ENCODE measurements at regions of chr10 and their contacts with region 1.

Region 1: DNA sequence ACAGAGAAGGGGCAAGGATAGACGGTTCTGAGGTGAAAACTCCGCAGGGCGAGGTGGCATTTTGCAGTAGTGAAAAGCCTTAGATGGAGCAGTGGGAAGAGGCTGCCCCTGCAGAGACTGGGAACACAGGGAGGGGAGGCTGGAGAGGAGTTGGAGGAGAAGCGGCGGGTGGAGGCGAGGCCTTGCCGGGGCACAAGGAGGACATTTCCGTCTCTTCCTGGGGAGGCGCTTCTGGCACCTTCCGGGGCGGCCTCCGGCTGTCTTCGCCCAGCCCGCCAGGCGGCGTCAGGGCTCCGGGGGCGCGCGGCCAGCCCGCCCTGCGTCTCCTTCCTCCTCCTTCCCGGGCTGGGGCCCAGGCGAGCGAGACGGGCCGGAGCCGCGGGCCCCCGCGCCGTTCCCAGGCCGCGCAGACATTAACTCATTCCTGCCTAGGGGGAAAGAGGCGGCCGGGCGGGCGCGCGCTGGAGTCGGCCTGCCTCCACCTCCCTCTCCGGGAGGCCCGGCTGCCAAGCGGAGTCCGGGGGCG is 42.7 kb downstream of the LDB3 start:
- DNase-seq: peak; percentile 79 to 90 (median 85)
- ATAC-seq: peak; percentile 95
- H3K4me3 ChIP-seq: peak overlapping the region; percentile 73
- H3K4me3 Mint-ChIP-seq: peak overlapping the region; percentile 82 to 93 (median 88)
- H3K27ac ChIP-seq: peak overlapping the region; percentile 87
- H3K27ac Mint-ChIP-seq: peak overlapping the region; percentile 94 to 97 (median 95)
- H3K4me1 ChIP-seq: peaks cover 5 to 9% of the 10 kb centered on the region in 2 donors
- H3K4me1 Mint-ChIP-seq: peaks cover 4 to 17% (median 8%) of the 10 kb centered on the region in 7 donors
- H3K27me3 ChIP-seq: no peaks in the 10 kb centered on the region
- H3K27me3 Mint-ChIP-seq: no peaks in the 10 kb centered on the region

Region 2: DNA sequence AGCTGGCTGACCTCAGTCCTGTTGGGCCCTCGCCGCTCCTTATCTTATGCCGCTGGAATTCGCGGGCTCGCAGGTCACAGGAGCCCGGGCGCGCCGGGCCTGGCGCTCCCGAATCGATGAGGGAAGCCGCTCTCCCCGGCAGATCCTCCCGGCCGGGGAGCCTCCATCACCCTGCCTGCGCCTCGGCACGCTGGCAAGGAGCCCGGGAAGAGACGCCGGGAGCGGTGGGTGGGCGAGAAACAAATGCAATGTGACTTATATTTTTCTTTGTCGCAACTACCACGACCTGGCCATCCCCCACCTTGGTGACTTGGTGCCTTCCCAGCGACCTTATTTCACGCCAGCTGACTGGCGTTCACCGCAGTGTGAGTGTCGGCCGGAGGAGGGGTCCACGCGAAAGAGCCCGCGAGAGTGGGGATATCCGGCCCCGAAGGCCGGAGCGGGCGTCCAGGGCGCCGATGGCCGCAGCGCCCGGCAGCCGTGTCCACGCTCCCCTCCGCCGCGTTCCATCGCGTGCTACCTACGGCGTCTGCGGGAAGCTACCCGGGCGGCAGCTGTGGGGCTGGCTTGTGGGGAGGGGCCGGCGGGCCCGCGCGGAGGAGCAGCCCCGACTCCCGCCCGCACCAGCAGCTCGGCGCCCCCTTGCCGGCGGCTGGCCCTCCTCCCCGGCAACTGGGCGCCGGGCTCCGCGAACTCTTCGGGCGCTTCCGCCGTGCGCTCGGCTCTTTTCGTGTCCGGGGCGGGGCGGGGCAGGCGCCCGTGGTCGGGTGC is 44.9 kb after region 1 on chr10:
- CTCF ChIA-PET with region 1: no interaction called
- POLR2A ChIA-PET with region 1: interaction called, 10 read pairs
- intact Hi-C with region 1: loop called (anchors 1 to 2 kb)
- DNase-seq: peak; percentile 68 to 95 (median 82)
- ATAC-seq: peak; percentile 97
- H3K4me3 ChIP-seq: peak overlapping the region; percentile 73
- H3K4me3 Mint-ChIP-seq: peak overlapping the region; percentile 78 to 95 (median 86)
- H3K27ac ChIP-seq: peak overlapping the region; percentile 50
- H3K27ac Mint-ChIP-seq: peak overlapping the region in 4 of 9 donors; percentile 31 to 71 (median 50)
- H3K4me1 ChIP-seq: peaks cover 9 to 11% of the 10 kb centered on the region in 2 donors
- H3K4me1 Mint-ChIP-seq: peaks cover 13 to 47% (median 36%) of the 10 kb centered on the region in 7 donors
- H3K27me3 ChIP-seq: peaks cover 0 to 6% of the 10 kb centered on the region in 2 donors
- H3K27me3 Mint-ChIP-seq: peaks cover 24 to 52% (median 31%) of the 10 kb centered on the region in 5 donors

Region 3: DNA sequence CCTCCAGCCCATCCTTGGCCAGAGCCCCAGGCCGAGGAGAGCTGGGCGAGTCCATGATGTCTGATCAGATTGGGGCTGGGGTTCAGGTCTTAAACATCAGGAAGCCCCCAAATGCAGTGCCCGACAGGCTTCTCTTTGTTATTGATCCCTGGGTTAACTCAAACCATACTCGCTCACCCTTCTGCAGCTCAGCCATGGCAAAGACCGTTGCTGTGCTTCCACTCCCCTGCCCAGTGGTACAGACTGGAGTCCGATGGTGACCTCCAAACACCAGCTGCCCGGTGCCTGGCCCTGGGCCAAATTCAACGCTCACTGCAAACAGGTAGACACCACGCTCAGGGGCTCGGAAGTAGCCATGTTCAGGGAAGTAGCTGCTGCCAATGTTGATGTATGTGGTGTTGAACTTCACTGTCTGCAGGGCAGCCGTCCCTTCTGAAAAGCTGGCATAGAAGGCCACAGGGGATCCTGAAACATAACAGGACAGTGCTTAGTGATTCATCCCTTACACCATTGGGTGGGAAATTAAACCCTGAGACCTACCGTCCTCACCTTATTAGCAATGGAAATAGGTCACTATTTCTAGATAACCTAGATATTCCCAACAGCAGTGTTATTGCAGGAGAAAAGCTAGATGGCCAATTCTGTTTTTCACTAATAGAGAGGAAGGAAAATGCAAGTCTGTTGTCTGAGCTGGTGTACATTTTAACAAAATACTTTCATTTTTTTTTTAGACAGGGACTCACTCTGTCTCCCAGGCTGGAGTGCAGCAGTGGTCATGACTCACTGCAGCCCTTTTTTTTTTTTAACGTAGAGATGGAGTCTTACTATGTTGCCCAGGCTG is 225.8 kb after region 1 on chr10:
- CTCF ChIA-PET with region 1: no interaction called
- POLR2A ChIA-PET with region 1: no interaction called
- intact Hi-C with region 1: loop called (anchors 1 kb)
- DNase-seq: peak in 1 of 9 donors; percentile 5
- ATAC-seq: no peak
- H3K4me3 ChIP-seq: no peak overlapping the region
- H3K4me3 Mint-ChIP-seq: no peak overlapping the region
- H3K27ac ChIP-seq: no peak overlapping the region
- H3K27ac Mint-ChIP-seq: no peak overlapping the region
- H3K4me1 ChIP-seq: no peaks in the 10 kb centered on the region
- H3K4me1 Mint-ChIP-seq: peaks cover 0 to 7% (median 0%) of the 10 kb centered on the region in 7 donors
- H3K27me3 ChIP-seq: no peaks in the 10 kb centered on the region
- H3K27me3 Mint-ChIP-seq: peaks cover 0 to 3% (median 0%) of the 10 kb centered on the region in 5 donors

Region 4: GRCh38 chr10:86971232-86971991 is 260.4 kb after region 1 on chr10:
- CTCF ChIA-PET with region 1: interaction called, 3 read pairs
- POLR2A ChIA-PET with region 1: no interaction called
- intact Hi-C with region 1: loop called (anchors 1 kb)
- DNase-seq: peak; percentile 85 to 95 (median 90)
- ATAC-seq: peak; percentile 93
- H3K4me3 ChIP-seq: peak overlapping the region; percentile 78
- H3K4me3 Mint-ChIP-seq: peak overlapping the region; percentile 76 to 89 (median 84)
- H3K27ac ChIP-seq: peak overlapping the region; percentile 91
- H3K27ac Mint-ChIP-seq: peak overlapping the region; percentile 78 to 96 (median 92)
- H3K4me1 ChIP-seq: peaks cover 12 to 36% of the 10 kb centered on the region in 2 donors
- H3K4me1 Mint-ChIP-seq: peaks cover 19 to 47% (median 45%) of the 10 kb centered on the region in 7 donors
- H3K27me3 ChIP-seq: no peaks in the 10 kb centered on the region
- H3K27me3 Mint-ChIP-seq: peaks cover 0 to 49% (median 0%) of the 10 kb centered on the region in 5 donors

Region 5: DNA sequence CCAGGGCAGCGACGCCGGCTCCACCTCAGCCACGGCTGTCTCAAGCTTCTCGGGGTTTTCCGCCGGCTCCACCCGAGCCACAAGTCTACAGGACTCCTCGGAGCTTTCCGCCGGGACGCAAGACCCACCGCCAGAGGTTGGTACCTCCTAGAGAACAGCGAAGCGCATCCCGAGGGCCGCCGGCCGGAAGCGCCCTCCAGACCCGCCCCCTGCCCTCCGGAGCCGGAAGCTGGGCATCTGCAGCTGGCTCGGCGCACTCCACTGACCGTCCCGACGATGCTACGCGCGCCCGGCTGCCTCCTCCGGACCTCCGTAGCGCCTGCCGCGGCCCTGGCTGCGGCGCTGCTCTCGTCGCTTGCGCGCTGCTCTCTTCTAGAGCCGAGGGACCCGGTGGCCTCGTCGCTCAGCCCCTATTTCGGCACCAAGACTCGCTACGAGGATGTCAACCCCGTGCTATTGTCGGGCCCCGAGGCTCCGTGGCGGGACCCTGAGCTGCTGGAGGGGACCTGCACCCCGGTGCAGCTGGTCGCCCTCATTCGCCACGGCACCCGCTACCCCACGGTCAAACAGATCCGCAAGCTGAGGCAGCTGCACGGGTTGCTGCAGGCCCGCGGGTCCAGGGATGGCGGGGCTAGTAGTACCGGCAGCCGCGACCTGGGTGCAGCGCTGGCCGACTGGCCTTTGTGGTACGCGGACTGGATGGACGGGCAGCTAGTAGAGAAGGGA is 793.8 kb after region 1 on chr10 and contains the start of gene MINPP1:
- CTCF ChIA-PET with region 1: no interaction called
- POLR2A ChIA-PET with region 1: no interaction called
- intact Hi-C with region 1: loop called in 1 of 2 experiments (anchors 1 kb)
- DNase-seq: peak; percentile 38 to 86 (median 48)
- ATAC-seq: peak; percentile 80
- H3K4me3 ChIP-seq: peak within 1 kb of the TSS; percentile 87
- H3K4me3 Mint-ChIP-seq: peak within 1 kb of the TSS; percentile 86 to 97 (median 92)
- H3K27ac ChIP-seq: peak within 1 kb of the TSS; percentile 59
- H3K27ac Mint-ChIP-seq: peak within 1 kb of the TSS; percentile 54 to 93 (median 75)
- H3K4me1 ChIP-seq: peaks cover 12 to 13% of the 10 kb centered on the region in 2 donors
- H3K4me1 Mint-ChIP-seq: peaks cover 23 to 56% (median 39%) of the 10 kb centered on the region in 7 donors
- H3K27me3 ChIP-seq: no peaks in the 10 kb centered on the region
- H3K27me3 Mint-ChIP-seq: peaks cover 0 to 24% (median 0%) of the 10 kb centered on the region in 5 donors
- total RNA-seq, gene MINPP1: 1.8 to 9.5 (median 9.2) TPM

Measured in naive thymus-derived CD4-positive, alpha-beta T cell (primary cell).